ENCODE measurements at regions of chr11 and their contacts with region 1.

Region 1: DNA sequence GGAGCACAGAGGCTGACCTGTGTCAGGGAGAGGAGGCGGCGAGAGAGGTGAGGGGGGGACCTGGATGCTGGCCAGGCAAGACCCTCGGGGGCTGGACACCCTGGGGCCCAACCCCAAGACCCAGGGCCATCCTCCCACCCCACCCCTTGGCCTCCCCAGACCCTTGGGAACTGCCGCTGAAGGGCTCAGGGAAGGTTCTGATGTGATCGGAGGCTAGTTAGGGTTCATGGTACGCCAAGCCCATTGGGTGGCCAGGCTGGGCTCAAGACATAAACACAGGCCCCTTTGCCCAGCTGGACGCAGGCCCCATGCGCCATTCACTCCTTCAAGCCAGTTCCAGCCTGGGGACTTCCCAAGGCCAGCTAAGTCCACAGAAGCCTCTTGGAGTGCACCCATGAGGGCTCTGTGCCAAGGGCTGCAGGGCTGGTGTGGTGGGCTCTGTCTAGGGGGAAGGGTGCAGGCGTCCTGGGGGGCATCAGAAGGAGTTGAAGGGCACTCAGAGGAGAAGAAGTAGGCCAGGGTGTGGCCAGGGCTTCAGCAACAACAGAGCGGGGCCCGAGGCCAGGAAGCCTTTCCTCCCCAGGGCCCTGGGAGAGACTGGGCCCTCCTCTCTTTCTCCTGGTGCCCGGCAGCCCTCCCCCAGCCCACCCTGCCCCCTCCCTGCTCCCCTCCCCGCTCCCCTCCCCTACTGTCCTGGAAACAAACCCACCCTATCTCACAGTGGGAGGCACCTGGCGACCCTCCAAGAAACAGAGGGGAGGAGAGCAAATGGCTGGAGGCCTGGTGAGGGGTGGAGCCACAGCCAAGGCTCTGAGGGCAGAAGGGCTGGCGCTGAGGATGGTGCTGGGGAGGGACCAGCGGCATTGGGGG is 12.9 kb downstream of the TSPAN32 start:
- DNase-seq: peak; percentile 95
- ATAC-seq: peak; percentile 88 to 91

Region 2: DNA sequence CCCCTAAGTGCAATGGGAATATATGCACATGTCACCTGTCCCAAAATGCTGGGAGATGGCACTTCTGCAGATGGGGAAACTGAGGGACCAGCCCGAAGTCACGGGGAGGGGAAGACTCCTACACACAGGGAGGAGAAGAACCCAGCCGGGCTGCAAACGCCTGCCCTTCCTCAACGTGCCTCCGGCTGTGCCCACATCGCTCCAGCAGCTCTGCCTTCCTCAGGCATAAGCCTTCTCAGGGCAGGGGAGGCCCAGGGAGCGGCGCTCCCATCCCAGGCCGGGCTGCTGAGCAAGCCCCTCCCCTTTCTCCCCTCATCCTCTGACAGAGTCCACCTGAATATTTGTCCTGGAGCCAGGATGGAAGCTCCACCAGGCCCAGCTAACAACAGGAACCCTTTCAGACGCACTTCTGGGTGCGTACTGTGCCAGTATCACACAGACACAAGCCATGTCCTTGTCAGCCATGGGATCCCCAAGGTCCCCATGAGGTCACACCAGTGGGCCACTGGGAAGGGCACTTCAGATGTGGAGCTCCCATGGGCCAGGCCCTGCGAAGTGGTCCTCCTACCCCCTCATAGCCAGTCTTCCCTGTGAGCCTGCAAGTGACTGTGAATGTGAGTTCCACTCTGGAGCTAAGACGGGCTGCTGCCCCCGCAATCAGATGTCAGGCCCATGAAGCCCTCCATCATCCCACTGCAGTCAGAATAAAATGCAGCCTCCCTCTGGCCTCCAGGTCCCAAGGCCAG is 59.9 kb after region 1 on chr11:
- intact Hi-C with region 1: loop called in 1 of 2 experiments (anchors 1 kb)
- DNase-seq: peak; percentile 20
- ATAC-seq: peak in 1 of 2 donors; percentile 2

Region 3: DNA sequence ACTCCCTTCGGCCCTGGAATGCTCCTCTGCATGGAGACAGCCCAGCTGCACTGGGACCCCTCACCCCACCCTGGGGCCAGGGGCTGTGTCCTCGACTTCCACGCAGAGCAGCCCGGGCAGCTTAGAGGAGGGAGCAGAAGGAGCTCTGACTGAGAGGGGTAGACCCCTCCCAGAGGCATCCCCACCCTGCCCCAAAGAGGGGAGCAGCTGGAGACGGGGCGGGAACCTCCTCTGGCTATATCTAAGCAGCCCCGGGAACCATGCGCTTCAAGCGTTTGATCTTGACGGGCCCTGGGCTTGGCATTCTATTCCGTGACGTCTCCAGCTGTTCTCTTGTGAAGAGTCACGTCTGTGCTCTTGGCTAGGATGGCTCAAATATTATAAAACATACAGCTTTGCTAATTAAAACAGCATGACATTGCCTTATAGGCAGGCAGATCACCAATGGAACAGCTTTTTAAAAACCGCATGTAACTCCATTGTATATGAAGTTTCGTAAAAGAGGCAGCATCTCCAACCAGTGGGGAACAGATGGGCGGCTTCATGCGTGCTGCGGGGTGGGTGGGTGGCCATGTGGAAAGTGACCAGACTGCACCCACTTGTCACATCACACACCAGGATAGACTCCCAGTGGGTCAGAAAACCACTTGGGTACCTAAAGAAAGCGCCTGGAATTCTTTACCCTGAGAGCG is 137.7 kb after region 1 on chr11:
- intact Hi-C with region 1: no loop called
- DNase-seq: no peak
- ATAC-seq: no peak

Region 4: GRCh38 chr11:2892215-2893020 is 577.7 kb after region 1 on chr11:
- intact Hi-C with region 1: loop called in 1 of 2 experiments (anchors 10 kb)
- DNase-seq: peak; percentile 75
- ATAC-seq: peak; percentile 50 to 70

Measured in left cardiac atrium (tissue), 4 donors.